Mammary epithelial cell (primary cell): ENCODE measurements at regions of chr6 and their contacts with region 1.

Region 1: DNA sequence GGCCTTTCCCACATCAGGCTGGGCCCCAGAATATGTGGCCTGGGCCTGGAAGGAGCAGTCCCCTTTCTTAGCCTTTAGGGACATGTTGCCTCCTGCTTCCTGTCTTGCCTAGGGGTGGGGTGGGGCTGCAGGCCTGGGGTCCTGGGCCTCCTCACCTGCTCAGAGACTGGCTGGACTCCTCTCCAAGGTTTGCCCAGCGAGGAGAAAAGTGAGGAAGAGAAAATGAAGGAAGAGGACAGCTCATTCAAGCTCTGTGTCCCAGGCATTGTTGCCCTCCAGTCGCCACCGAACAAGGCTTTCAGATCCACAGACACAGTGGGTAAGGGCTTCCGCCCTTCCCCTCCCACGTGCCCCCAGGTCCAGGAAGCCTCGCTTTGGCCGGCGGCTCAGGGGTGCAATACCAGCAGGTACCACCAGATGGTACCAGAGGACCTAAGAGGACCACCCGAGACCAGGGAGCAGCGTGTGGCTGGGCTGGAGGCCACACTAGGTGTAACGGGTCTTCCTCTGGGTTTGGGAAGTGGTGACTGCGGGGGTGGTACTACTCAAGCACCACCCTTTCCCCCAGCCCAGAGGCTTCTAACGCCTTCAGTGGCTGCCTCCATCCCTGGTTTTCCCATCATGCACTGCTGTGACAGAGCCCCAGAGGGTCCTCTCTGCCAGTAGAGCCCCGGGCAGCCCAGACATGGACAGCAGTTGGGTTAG is 5.5 kb upstream of the BAK1 start:
- DNase-seq: peak; percentile 69
- H3K4me3 ChIP-seq: no peak overlapping the region
- H3K27ac ChIP-seq: no peak overlapping the region
- H3K4me1 ChIP-seq: peaks cover 21% of the 10 kb centered on the region
- H3K27me3 ChIP-seq: no peaks in the 10 kb centered on the region
- CTCF ChIP-seq: peak; percentile 98 to 99

Region 2: DNA sequence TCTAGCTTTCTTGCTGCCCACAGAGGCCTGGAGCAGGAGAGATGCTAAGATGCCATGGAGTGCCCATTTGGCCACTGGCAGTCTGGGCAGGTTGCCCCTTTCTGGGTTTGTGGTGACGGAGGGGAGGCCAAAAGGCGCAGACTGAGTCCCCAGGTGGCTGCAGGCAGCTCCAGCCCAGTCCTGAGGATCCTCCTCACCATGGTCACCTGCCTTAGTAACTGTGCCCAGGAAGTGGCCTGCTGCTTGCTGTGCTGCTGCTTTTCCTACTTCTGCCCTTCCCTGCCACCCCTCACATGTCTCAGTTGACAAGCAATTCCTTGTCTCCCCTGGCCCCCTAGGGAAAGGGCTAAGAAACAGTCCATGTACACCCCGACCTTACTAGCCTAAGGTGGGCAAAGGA is 229.3 kb before region 1 on chr6:
- CTCF ChIA-PET with region 1: no interaction called
- dilution Hi-C with region 1: no loop called
- in situ Hi-C with region 1: no loop called
- intact Hi-C with region 1: no loop called
- DNase-seq: no peak
- H3K4me3 ChIP-seq: no peak overlapping the region
- H3K27ac ChIP-seq: no peak overlapping the region
- H3K4me1 ChIP-seq: no peaks in the 10 kb centered on the region
- H3K27me3 ChIP-seq: no peaks in the 10 kb centered on the region
- CTCF ChIP-seq: no peak

Region 3: DNA sequence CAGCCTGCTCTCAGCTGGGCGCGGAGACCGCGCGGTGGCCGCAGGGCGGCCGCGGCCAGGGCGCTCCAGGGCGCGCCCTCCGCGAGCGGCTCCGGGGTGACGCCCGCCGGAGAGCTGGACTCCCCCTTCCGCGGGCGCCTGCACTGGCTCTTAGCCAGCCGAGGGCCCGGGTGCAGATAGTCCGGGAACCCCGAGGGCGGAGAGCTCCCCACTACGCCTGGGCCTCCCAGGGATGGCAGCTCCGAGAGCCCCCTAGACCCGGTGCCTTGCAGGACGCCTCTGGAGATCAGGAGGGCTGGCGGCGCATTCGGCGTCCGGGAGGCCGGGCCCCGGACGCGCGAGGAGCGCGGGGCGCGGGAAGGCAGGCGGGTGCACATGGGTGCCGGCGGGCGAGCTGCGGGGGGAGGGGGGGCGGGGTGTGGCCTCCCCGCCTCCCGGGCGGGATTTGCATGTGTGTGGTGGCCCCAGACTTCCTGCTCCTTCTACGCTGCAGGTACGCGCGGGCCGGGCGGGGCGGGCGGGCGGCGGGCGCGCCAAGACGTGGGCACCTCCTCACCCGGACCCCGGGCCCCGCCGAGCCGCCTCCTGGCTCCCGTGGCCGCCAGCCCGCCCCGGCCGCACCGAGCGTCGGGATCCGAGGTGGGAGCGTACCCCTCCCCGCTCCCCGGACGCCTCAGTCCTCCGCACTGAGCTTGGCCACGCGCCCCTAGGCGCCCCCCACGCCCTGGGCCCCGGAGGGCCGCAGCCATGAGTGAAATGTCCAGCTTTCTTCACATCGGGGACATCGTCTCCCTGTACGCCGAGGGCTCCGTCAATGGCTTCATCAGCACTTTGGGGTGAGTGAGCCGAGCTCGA is 35.5 kb after region 1 on chr6 and contains the start of gene ITPR3:
- CTCF ChIA-PET with region 1: no interaction called
- dilution Hi-C with region 1: no loop called
- in situ Hi-C with region 1: no loop called
- intact Hi-C with region 1: loop called (anchors 1 kb)
- DNase-seq: peak; percentile 83
- H3K4me3 ChIP-seq: peak within 1 kb of the TSS; percentile 61 to 83 (median 80)
- H3K27ac ChIP-seq: peak within 1 kb of the TSS; percentile 77
- H3K4me1 ChIP-seq: peaks cover 34% of the 10 kb centered on the region
- H3K27me3 ChIP-seq: no peaks in the 10 kb centered on the region
- CTCF ChIP-seq: no peak
- total RNA-seq, gene ITPR3: 125 to 155 TPM

Region 4: GRCh38 chr6:33661106-33661838 is 75.7 kb after region 1 on chr6:
- CTCF ChIA-PET with region 1: no interaction called
- dilution Hi-C with region 1: loop called (anchors 5 kb)
- in situ Hi-C with region 1: no loop called
- intact Hi-C with region 1: no loop called
- DNase-seq: no peak
- H3K4me3 ChIP-seq: no peak overlapping the region
- H3K27ac ChIP-seq: no peak overlapping the region
- H3K4me1 ChIP-seq: no peaks in the 10 kb centered on the region
- H3K27me3 ChIP-seq: no peaks in the 10 kb centered on the region
- CTCF ChIP-seq: no peak

Region 5: DNA sequence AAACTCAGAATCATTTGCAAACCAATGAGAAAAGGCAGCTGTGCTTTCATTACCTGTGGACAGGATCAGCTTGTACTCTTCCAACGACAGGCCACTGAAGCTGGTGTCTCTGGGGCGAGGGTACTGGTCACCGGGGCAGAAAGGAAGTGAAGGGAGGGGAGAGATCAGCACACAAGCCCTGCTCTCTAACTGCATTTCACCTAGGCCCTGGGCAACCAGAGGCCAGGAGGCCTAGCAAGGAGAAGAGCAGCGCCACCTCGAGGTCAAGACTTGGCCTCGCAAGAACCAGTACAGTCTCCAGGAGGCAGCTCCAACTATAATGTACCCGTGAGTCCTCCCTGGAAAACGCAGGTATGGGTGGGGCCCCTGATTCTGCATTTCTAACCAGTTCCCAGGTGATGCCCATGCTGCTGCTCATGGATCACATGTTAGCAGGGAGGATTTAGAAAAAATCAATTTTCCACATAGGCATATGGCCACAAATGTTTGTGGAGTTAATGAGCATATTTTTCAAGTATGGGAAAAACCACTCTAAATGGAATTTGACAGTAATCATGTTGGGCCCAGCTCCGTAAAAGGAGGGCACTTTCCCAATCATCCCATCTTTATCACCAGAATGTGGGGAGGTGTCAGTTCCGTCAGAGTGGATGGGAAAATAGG is 115.0 kb after region 1 on chr6:
- CTCF ChIA-PET with region 1: interaction called, 6 read pairs
- dilution Hi-C with region 1: no loop called
- in situ Hi-C with region 1: loop called (anchors 5 to 10 kb)
- intact Hi-C with region 1: loop called (anchors 1 kb)
- DNase-seq: peak; percentile 74
- H3K4me3 ChIP-seq: no peak overlapping the region
- H3K27ac ChIP-seq: no peak overlapping the region
- H3K4me1 ChIP-seq: peaks cover 26% of the 10 kb centered on the region
- H3K27me3 ChIP-seq: no peaks in the 10 kb centered on the region
- CTCF ChIP-seq: peak; percentile 74 to 90

Region 6: DNA sequence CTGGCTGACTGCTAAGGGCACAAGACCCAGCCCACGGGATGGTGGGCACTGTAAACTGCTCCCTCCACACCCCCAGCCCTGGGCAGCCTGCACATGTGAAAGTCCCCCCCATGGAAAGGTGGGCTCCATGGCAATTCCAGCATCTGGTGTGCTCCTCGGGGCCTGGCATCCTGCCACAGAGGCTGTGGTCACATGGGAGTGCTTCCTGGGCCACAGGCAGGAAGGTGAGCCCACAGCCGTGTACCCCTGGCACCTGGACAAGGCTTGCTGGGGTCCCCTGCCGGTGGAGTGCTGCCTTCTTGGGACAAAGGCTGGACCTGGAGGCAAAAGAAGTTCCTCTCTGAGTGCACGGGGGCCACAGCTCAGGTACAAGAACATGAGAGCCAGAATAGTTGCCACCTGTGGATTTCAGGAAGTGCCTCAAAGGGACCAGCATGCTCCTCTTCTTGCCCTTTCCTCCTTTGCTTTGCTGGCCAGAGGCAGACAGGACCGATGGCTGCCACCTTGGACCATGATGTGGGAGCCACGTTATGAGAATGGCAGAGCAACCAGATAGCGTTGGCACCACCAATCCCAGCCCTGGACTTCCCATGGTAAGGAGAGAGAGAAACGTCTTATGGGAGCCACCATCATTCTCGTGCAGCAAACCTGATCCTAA is 338.4 kb after region 1 on chr6:
- CTCF ChIA-PET with region 1: no interaction called
- dilution Hi-C with region 1: no loop called
- in situ Hi-C with region 1: no loop called
- intact Hi-C with region 1: no loop called
- DNase-seq: no peak
- H3K4me3 ChIP-seq: no peak overlapping the region
- H3K27ac ChIP-seq: no peak overlapping the region
- H3K4me1 ChIP-seq: no peaks in the 10 kb centered on the region
- H3K27me3 ChIP-seq: no peaks in the 10 kb centered on the region
- CTCF ChIP-seq: no peak

Region 7: GRCh38 chr6:34132486-34133185 is 547.1 kb after region 1 on chr6:
- CTCF ChIA-PET with region 1: no interaction called
- dilution Hi-C with region 1: loop called (anchors 5 kb)
- in situ Hi-C with region 1: no loop called
- intact Hi-C with region 1: no loop called
- DNase-seq: peak; percentile 23
- H3K4me3 ChIP-seq: no peak overlapping the region
- H3K27ac ChIP-seq: no peak overlapping the region
- H3K4me1 ChIP-seq: no peaks in the 10 kb centered on the region
- H3K27me3 ChIP-seq: no peaks in the 10 kb centered on the region
- CTCF ChIP-seq: no peak